Right ventricle myocardium inferior (tissue), 1 donor: ENCODE measurements at regions of chr9 and their contacts with region 1.

Region 1: GRCh38 chr9:15606643-15607472 is 54.0 kb downstream of the CCDC171 start:
- DNase-seq: no peak
- ATAC-seq: no peak

Region 2: DNA sequence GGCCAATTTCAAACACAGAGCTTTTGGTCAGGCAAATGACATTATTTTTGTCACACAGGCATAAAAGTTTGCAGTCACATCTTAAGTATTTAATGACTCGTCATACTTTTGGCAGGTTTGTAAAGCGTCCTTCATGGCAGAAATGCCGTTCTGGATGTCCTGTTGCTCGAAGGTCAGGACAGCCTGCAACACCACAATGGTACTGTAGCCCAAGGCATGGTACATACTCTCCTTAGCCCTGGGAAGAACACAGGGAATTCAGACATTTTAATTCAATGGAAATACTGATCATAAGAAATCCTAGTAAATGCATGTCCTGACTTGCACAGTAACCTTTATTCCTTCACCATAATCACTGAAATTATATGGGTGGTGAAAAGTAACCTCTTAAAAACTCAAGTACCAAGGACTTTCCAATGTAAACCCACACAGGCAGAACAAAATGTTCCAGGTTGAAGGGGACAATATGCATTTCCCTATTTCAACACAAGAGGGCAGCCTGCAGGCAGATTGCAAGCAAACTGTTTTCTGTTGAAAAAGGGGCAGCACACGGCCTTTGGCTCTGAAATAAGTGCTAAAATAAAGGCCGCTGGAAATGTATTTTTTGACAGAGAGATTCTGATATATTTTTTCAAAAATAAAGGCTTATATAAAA is 395.6 kb before region 1 on chr9:
- intact Hi-C with region 1: loop called (anchors 2 kb)
- DNase-seq: no peak
- ATAC-seq: peak; percentile 48

Region 3: GRCh38 chr9:15277400-15278090 is 329.3 kb before region 1 on chr9:
- intact Hi-C with region 1: loop called (anchors 5 kb)
- DNase-seq: no peak
- ATAC-seq: no peak

Region 4: GRCh38 chr9:15670884-15671283 is 64.0 kb after region 1 on chr9:
- intact Hi-C with region 1: no loop called
- DNase-seq: no peak
- ATAC-seq: no peak